GM10248 (cell line): ENCODE measurements at regions of chr12 and their contacts with region 1.

Region 1: GRCh38 chr12:91811481-91812287 is 334.0 kb downstream of the BTG1 start:
- DNase-seq: peak; percentile 27
- CTCF ChIP-seq: peak; percentile 69

Region 2: GRCh38 chr12:91382081-91382543 is 429.6 kb before region 1 on chr12:
- CTCF ChIA-PET with region 1: interaction called, 17 read pairs
- POLR2A ChIA-PET with region 1: no interaction called
- DNase-seq: peak; percentile 32
- CTCF ChIP-seq: peak; percentile 77

Region 3: DNA sequence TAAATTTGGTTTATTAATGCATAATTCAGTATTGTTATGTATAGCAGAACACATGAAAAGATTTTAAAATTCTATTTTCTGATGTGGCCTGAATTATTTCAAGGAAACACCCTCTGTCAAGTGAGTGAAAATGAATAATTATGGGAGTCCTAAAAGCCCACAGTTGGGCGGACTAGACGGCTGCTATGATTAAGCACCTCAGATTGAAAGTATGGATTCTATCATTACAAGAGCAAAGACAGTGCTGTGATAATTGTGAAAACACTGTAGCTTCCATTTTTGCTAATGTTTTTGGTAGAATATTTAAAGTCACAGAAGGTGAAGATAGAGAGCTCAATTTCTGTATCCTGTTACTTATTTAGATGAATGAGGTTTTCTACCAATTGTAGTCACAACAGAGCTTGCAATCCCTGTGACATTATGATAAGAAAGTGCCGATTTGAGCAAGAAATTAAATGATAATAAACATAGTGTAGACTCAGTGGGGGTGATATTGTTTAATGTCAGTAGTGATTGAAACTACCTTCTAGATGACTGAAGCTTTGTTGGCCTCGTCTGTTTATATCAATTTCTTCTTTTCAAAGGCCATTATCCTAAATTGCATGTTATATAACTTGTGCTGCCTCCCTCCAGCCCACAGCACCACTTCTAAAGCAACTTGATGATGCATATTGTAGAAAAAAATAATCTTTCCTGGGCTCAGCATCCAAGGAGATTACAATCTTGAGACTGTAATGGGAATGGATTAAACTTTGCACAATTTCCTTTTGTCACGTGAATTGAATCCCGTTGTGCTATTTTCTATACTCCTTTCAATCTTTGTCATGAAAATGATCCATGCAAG is 25.8 kb before region 1 on chr12:
- CTCF ChIA-PET with region 1: interaction called, 18 read pairs
- POLR2A ChIA-PET with region 1: no interaction called
- DNase-seq: no peak
- CTCF ChIP-seq: no peak

Region 4: DNA sequence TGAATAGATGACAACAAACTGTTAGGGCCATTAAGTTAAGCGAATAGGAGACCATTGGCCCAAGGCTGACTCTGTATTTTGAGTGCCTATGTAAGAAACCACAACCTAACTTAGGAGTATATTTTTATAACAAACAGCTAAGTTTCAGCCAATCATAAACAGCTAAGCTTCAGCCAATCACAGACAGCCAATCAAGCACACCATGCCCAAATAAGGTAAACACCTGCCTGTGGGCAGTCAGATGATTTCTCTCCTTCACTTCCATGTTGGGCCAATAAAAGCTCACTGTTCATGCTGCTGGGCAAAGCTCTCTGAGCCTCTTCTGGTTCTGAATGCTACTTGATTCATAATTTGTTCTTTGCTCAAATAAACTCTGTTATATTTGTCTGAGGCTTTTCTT is 10.6 kb before region 1 on chr12:
- CTCF ChIA-PET with region 1: interaction called, 35 read pairs
- POLR2A ChIA-PET with region 1: no interaction called
- DNase-seq: no peak
- CTCF ChIP-seq: no peak

Region 5: DNA sequence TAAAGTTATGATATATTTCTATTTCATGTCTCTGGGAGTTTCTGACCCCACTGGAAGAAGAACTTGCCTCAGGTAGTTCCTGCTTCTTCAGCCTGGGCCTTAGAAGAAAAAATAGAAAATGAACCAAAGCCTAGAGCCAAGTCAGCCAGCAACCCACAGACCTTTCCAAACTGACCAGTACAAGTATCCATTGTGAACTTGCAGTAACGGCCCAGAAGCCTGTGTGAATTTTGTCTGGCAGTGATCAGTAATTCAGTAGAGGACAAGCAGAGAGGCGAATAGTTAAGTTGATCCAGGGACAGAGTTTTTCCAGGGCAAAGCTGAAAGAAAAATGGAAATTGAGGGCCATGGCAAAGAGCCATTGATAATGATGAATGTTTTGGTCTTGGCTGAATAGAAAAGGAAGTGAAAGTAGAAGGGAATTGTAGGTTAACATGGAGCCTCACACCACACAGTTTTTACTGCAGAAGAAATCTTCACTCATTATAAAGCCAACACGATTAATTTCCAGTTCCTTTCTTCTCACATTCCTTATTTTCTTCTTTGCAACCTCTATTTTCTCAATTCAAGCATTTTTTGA is 22.2 kb after region 1 on chr12:
- CTCF ChIA-PET with region 1: interaction called, 34 read pairs
- POLR2A ChIA-PET with region 1: no interaction called
- DNase-seq: no peak
- CTCF ChIP-seq: no peak

Region 6: GRCh38 chr12:92136965-92137721 is 325.5 kb after region 1 on chr12:
- CTCF ChIA-PET with region 1: interaction called, 13 read pairs
- POLR2A ChIA-PET with region 1: no interaction called
- DNase-seq: no peak
- CTCF ChIP-seq: no peak

Region 7: DNA sequence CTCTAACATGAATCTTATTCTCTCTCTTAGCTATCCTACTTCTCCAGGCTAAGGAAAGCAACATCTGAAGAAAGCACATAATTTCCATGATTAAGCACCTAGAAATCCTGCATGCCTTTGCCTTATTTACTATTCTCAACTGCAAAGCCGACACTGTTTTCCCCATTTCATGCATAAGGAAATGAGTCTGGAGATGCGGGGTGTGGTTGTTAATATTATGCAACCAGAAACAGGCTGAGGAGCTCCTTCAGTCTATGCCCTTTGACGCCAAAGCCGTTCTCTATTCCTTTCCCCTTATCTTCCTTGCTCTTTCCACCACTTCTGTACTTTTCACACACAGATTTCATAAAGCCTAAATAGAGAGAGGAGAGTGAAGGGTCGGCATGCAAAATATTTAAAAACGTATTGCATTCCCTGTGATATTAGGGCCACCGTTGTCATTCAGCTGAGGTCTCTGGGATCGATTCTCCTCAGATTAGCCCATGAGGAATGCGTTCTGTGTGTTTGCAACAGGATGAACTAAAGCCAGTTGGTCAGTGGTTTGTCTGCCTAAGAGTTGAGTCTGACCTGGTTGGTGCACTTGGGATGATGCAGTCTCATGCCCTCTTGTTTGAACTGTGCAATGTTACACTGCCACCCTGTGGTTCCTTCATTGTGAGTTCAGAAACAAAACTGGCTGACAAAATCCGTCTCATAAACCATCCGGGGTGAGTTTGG is 838.0 kb after region 1 on chr12:
- CTCF ChIA-PET with region 1: interaction called, 10 read pairs
- POLR2A ChIA-PET with region 1: no interaction called
- DNase-seq: peak; percentile 66
- CTCF ChIP-seq: peak; percentile 70